ENCODE measurements at regions of chr2 and their contacts with region 1.

Region 1: GRCh38 chr2:61485281-61485680 is 14.4 kb upstream of the USP34 start:
- DNase-seq: no peak
- ATAC-seq: no peak
- H3K4me3 ChIP-seq: no peak overlapping the region
- H3K27ac ChIP-seq: no peak overlapping the region
- H3K4me1 ChIP-seq: no peaks in the 10 kb centered on the region
- H3K27me3 ChIP-seq: no peaks in the 10 kb centered on the region
- CTCF ChIP-seq: no peak

Region 2: DNA sequence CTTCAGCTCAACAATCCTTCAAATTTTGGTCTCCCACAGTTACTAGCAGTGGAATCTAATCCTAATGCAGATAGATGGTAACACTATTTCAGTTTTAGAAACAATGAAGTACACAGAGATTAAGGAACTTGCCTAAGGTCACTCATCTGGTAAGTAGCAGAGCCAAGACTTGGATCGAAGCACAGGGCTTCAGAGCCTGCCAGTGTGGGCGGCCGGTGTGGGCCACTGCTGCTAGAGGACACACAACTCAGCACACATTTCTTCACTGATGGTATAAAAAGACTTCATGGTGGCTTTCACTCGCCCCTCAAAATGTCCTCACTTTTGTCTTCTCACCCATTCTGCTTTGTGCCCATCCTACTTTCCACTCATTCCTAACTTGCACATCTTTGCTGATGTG is 312.2 kb before region 1 on chr2:
- intact Hi-C with region 1: no loop called
- DNase-seq: no peak
- ATAC-seq: no peak
- H3K4me3 ChIP-seq: no peak overlapping the region
- H3K27ac ChIP-seq: no peak overlapping the region
- H3K4me1 ChIP-seq: peaks cover 0 to 14% (median 7%) of the 10 kb centered on the region in 9 donors
- H3K27me3 ChIP-seq: no peaks in the 10 kb centered on the region
- CTCF ChIP-seq: no peak

Region 3: GRCh38 chr2:61549546-61549945 is 64.3 kb after region 1 on chr2:
- intact Hi-C with region 1: no loop called
- DNase-seq: no peak
- ATAC-seq: no peak
- H3K4me3 ChIP-seq: no peak overlapping the region
- H3K27ac ChIP-seq: no peak overlapping the region
- H3K4me1 ChIP-seq: no peaks in the 10 kb centered on the region
- H3K27me3 ChIP-seq: no peaks in the 10 kb centered on the region
- CTCF ChIP-seq: no peak

Region 4: GRCh38 chr2:61862085-61862484 is 376.8 kb after region 1 on chr2:
- intact Hi-C with region 1: loop called in 1 of 10 experiments (anchors 10 kb)
- DNase-seq: no peak
- ATAC-seq: no peak
- H3K4me3 ChIP-seq: no peak overlapping the region
- H3K27ac ChIP-seq: no peak overlapping the region
- H3K4me1 ChIP-seq: no peaks in the 10 kb centered on the region
- H3K27me3 ChIP-seq: no peaks in the 10 kb centered on the region
- CTCF ChIP-seq: no peak

Region 5: DNA sequence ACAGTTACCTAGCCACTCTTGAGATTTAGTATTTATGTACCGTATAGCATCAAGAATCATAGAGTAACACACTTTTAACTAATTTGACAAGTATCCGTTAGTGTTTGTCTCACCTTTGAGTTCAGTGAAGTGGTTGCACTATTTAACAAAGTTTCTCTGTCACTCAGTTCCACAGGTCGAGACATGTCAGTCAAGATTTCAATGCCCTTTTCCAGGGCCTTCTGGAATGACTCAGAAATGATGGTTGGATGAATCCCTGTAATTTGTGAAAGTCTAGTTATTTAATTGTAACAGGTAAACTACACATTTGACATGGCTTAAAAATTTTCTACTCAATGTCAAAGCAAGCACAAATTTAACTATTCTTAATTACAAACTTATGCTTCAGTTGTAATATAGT is 393.5 kb after region 1 on chr2:
- intact Hi-C with region 1: loop called in 1 of 10 experiments (anchors 10 kb)
- DNase-seq: no peak
- ATAC-seq: no peak
- H3K4me3 ChIP-seq: no peak overlapping the region
- H3K27ac ChIP-seq: no peak overlapping the region
- H3K4me1 ChIP-seq: no peaks in the 10 kb centered on the region
- H3K27me3 ChIP-seq: no peaks in the 10 kb centered on the region
- CTCF ChIP-seq: no peak

Measured in heart right ventricle (tissue), 16 donors.